Ascending aorta (tissue), 2 donors: ENCODE measurements at regions of chr5 and their contacts with region 1.

Region 1: GRCh38 chr5:59673438-59674058 is 220.0 kb downstream of the PDE4D start:
- DNase-seq: no peak
- H3K4me3 ChIP-seq: no peak overlapping the region
- H3K27ac ChIP-seq: no peak overlapping the region
- H3K4me1 ChIP-seq: no peaks in the 10 kb centered on the region
- H3K27me3 ChIP-seq: no peaks in the 10 kb centered on the region
- CTCF ChIP-seq: peak; percentile 55 to 86 (median 81)

Region 2: DNA sequence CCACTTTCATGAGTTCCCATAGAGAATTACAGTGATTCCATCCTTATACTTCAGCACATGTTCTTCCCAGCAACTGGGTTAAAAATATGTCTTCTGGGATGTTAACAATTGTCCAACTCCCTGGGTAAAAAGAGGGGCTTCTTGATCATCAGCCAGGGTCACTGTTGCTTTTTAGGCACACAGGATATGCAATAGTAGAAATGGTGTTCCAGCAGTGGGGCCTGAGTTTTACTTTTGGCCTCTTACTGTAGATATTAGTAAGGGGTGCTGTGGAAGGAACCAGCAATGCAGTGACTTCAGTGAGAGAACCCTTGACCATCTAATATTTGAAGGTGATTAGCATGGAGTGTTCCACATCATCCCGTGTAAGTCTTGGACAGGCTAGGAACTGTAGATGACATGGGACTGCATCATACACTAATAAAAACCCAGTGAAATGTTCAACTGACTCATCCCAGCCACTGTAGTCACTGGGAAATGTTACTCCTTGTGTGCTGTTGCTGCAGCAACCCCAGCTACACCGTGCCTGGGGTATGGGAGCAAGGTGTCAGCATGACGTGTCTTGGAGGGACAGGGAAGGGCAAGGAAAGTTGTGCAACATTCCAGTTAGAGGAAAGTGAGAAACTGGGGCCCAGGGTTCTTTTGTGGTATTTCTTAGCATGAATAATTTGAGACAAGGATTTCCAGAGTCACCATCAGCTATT is 479.8 kb before region 1 on chr5:
- intact Hi-C with region 1: loop called (anchors 10 kb)
- DNase-seq: no peak
- H3K4me3 ChIP-seq: no peak overlapping the region
- H3K27ac ChIP-seq: no peak overlapping the region
- H3K4me1 ChIP-seq: no peaks in the 10 kb centered on the region
- H3K27me3 ChIP-seq: no peaks in the 10 kb centered on the region
- CTCF ChIP-seq: no peak

Region 3: DNA sequence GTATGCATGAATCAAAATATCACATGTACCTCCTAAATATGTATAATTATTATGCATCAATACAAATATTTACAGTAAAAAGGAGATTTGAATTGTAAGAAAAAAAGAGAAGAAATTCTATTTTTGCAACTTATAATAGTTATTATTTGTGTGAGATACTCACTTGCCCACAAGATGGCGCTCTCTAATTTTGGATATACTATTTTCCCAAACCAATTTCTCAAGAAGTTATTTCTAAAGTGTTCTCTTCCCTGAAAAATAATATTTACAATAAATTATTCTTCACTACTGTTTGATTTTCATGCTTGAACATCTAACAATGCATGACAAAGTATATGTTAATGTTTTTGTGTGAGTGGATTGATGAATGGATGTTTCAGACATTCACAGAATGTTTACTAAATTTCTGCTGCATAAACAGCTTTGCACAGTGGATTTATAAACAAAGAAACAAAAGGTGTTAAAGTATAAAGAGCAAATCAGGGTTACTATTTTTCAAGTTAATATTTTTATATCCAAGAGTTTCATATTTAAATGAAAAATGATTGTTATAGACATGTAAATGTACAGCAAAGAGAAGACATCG is 283.4 kb before region 1 on chr5:
- intact Hi-C with region 1: loop called (anchors 2 kb)
- DNase-seq: no peak
- H3K4me3 ChIP-seq: no peak overlapping the region
- H3K27ac ChIP-seq: no peak overlapping the region
- H3K4me1 ChIP-seq: no peaks in the 10 kb centered on the region
- H3K27me3 ChIP-seq: no peaks in the 10 kb centered on the region
- CTCF ChIP-seq: peak; percentile 31 to 65 (median 58)

Region 4: DNA sequence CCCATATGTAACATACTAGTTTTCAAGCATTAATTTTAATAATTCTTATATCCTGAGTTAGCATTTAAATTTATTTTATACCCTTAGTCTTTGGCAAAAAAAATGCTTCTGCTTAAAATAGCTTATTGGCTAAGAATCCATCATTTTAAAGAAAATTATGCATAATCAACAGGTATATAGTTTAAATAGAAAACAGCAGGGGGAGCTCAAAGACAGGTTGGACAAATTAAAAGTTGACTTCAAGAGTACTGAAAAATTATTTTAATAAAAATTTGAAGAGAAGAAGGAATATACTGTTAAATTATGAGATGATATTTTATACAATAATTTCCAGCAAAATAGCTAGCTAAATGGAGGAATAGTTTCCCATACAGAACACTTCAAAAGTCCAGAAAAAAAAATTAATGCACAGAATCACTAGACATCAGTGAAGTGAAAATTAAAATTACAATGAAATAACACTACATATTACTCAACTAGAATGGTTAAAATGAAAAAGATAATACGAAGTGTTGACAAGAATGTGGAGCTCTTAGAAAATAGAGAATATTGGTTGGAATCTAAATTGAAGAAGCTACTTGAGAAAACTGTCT is 167.2 kb before region 1 on chr5:
- intact Hi-C with region 1: loop called (anchors 5 kb)
- DNase-seq: no peak
- H3K4me3 ChIP-seq: no peak overlapping the region
- H3K27ac ChIP-seq: no peak overlapping the region
- H3K4me1 ChIP-seq: no peaks in the 10 kb centered on the region
- H3K27me3 ChIP-seq: no peaks in the 10 kb centered on the region
- CTCF ChIP-seq: peak; percentile 6 to 47 (median 39)

Region 5: GRCh38 chr5:59799668-59800346 is 126.3 kb after region 1 on chr5:
- intact Hi-C with region 1: loop called (anchors 5 kb)
- DNase-seq: no peak
- H3K4me3 ChIP-seq: no peak overlapping the region
- H3K27ac ChIP-seq: no peak overlapping the region
- H3K4me1 ChIP-seq: peaks cover 0 to 15% of the 10 kb centered on the region in 2 donors
- H3K27me3 ChIP-seq: no peaks in the 10 kb centered on the region
- CTCF ChIP-seq: peak; percentile 56 to 72 (median 69)